AG04449 (cell line): ENCODE measurements at regions of chr22 and their contacts with region 1.

Region 1: GRCh38 chr22:24156913-24157821 is 24.1 kb upstream of the SUSD2 start:
- DNase-seq: no peak
- H3K4me3 ChIP-seq: peak overlapping the region; percentile 83
- CTCF ChIP-seq: peak; percentile 97

Region 2: DNA sequence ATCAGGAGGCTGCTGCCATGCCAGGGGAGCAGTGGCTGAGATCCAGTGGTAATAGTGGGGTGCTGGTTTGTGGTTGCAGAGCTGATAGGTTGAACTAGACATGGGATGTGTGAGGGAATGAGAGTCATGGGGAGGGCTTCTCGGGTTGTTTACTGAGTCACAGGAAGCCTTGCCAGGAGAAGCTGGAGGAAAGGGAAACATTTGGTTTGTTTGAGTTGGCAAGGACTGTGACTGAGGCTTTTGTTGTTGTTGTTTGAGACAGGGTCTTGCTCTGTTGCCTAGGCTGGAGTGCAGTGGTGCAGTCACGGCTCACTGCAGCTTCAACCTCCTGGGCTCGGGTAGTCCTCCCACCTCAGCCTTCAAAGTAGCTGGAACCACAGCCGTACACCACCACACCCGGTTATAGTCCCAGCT is 96.8 kb before region 1 on chr22:
- CTCF ChIA-PET with region 1: interaction called, 45 read pairs
- POLR2A ChIA-PET with region 1: no interaction called
- DNase-seq: peak; percentile 79
- H3K4me3 ChIP-seq: no peak overlapping the region
- CTCF ChIP-seq: no peak

Region 3: GRCh38 chr22:24115247-24116207 is 41.6 kb before region 1 on chr22:
- CTCF ChIA-PET with region 1: interaction called, 14 read pairs
- POLR2A ChIA-PET with region 1: no interaction called
- DNase-seq: no peak
- H3K4me3 ChIP-seq: no peak overlapping the region
- CTCF ChIP-seq: no peak

Region 4: GRCh38 chr22:24140357-24140756 is 16.8 kb before region 1 on chr22:
- CTCF ChIA-PET with region 1: interaction called, 71 read pairs
- POLR2A ChIA-PET with region 1: interaction called, 3 read pairs
- DNase-seq: no peak
- H3K4me3 ChIP-seq: no peak overlapping the region
- CTCF ChIP-seq: no peak

Region 5: GRCh38 chr22:24175160-24175808 is 18.1 kb after region 1 on chr22:
- CTCF ChIA-PET with region 1: interaction called, 104 read pairs
- POLR2A ChIA-PET with region 1: no interaction called
- DNase-seq: no peak
- H3K4me3 ChIP-seq: no peak overlapping the region
- CTCF ChIP-seq: peak; percentile 96

Region 6: GRCh38 chr22:24379536-24379935 is 222.4 kb after region 1 on chr22:
- CTCF ChIA-PET with region 1: no interaction called
- POLR2A ChIA-PET with region 1: no interaction called
- DNase-seq: no peak
- H3K4me3 ChIP-seq: no peak overlapping the region
- CTCF ChIP-seq: no peak